PC-9 (cell line): ENCODE measurements at regions of chr2 and their contacts with region 1.

Region 1: DNA sequence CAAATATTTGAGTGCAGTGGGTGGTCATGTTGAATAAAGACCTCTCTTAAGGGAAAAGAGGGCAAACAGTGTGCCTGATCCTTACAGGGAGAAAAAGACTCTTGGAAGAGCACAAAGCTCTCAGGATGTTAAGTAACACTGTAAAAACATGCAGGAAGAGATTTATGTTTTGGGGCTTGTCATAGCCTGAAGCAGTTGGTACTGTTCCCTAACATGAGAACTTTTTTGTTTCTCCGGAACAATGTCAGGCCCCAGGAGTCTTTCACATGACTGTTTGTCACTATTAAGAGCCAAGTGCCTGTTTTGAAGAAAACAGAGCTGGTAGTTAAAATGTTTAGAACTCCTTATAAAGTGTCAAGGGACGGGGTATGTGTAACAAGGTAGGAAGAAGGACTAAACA is 83.7 kb upstream of the B3GNT2 start:
- DNase-seq: no peak
- H3K4me3 ChIP-seq: no peak overlapping the region
- H3K27ac ChIP-seq: no peak overlapping the region
- H3K4me1 ChIP-seq: no peaks in the 10 kb centered on the region
- H3K27me3 ChIP-seq: no peaks in the 10 kb centered on the region
- CTCF ChIP-seq: no peak

Region 2: DNA sequence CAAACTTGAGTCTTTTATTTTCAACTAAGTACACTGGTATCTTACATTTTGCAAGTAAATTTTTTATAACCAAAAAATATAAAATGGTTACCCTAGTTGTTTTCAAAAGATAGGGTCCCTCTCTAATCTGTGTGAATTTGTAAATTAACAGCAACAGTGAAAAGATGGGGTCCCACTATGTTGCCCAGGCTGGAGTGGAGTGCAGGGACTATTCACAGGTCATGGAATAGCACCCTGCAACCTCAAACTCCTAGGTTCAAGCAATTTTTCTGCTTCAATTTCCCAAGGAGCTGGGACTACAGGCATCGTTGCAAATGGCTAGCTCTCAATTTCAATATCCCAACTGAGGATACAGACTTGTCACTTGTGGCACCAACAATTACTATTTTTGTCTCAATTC is 235.8 kb before region 1 on chr2:
- CTCF ChIA-PET with region 1: no interaction called
- POLR2A ChIA-PET with region 1: no interaction called
- intact Hi-C with region 1: no loop called
- DNase-seq: no peak
- H3K4me3 ChIP-seq: no peak overlapping the region
- H3K27ac ChIP-seq: no peak overlapping the region
- H3K4me1 ChIP-seq: no peaks in the 10 kb centered on the region
- H3K27me3 ChIP-seq: no peaks in the 10 kb centered on the region
- CTCF ChIP-seq: no peak

Region 3: GRCh38 chr2:62055724-62056336 is 56.3 kb before region 1 on chr2:
- CTCF ChIA-PET with region 1: interaction called, 17 read pairs
- POLR2A ChIA-PET with region 1: no interaction called
- intact Hi-C with region 1: no loop called
- DNase-seq: no peak
- H3K4me3 ChIP-seq: no peak overlapping the region
- H3K27ac ChIP-seq: no peak overlapping the region
- H3K4me1 ChIP-seq: no peaks in the 10 kb centered on the region
- H3K27me3 ChIP-seq: no peaks in the 10 kb centered on the region
- CTCF ChIP-seq: no peak